Naive thymus-derived CD4-positive, alpha-beta T cell (primary cell): ENCODE measurements at regions of chr19 and their contacts with region 1.

Region 1: GRCh38 chr19:11203194-11204075 is 6.1 kb upstream of the KANK2 start:
- DNase-seq: peak in 4 of 9 donors; percentile 7 to 44 (median 21)
- ATAC-seq: peak; percentile 65
- H3K4me3 ChIP-seq: no peak overlapping the region
- H3K4me3 Mint-ChIP-seq: no peak overlapping the region
- H3K27ac ChIP-seq: no peak overlapping the region
- H3K27ac Mint-ChIP-seq: no peak overlapping the region
- H3K4me1 ChIP-seq: no peaks in the 10 kb centered on the region
- H3K4me1 Mint-ChIP-seq: peaks cover 0 to 3% (median 0%) of the 10 kb centered on the region in 7 donors
- H3K27me3 ChIP-seq: no peaks in the 10 kb centered on the region
- H3K27me3 Mint-ChIP-seq: peaks cover 0 to 19% (median 7%) of the 10 kb centered on the region in 5 donors

Region 2: DNA sequence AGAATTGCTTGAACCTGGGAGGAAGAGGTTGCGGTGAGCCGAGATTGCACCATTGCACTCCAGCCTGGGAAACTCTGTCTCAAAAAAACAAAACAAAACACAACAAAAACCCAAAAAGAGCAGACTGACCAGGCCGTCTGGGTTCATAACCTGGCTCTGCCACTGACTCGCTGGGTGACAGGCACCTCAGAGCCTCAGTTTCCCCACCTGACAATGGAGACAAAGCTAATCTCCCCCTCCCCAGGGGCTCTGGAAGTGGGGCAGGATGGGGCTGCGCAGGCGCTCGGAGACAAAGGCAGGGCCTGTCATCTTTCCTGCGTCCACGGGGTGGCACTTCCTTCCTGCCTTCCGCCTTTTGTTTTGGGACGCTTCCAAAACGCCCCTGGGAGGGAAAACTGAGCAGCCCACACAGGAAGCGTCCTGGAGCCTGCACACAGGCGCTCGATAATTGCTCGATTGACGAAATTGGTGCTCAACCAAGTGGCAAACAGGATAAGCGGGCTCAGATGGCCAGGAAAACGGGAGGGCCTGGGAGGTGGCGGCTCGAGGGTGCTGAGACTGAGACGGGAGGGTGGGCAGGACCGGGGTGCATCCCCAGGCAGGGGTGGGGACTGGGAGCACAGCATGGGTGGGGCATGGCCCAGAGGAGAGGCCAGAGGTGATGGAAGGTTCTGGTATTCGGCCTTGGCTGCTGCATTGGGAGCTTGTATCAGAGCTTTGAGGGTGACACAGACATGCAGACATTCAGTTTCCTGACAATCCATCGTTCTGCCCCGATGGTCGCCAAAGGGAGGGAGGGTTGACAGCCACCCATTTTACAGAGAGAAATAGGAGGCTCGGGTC is 65.7 kb before region 1 on chr19:
- CTCF ChIA-PET with region 1: interaction called, 5 read pairs
- POLR2A ChIA-PET with region 1: no interaction called
- intact Hi-C with region 1: loop called (anchors 1 kb)
- DNase-seq: peak; percentile 27 to 64 (median 56)
- ATAC-seq: peak; percentile 81
- H3K4me3 ChIP-seq: peak overlapping the region; percentile 52
- H3K4me3 Mint-ChIP-seq: peak overlapping the region; percentile 76 to 90 (median 86)
- H3K27ac ChIP-seq: no peak overlapping the region
- H3K27ac Mint-ChIP-seq: peak overlapping the region in 8 of 9 donors; percentile 37 to 81 (median 66)
- H3K4me1 ChIP-seq: peaks cover 4 to 12% of the 10 kb centered on the region in 2 donors
- H3K4me1 Mint-ChIP-seq: peaks cover 7 to 23% (median 11%) of the 10 kb centered on the region in 7 donors
- H3K27me3 ChIP-seq: no peaks in the 10 kb centered on the region
- H3K27me3 Mint-ChIP-seq: no peaks in the 10 kb centered on the region